HEK293 (cell line): ENCODE measurements at regions of chr11 and their contacts with region 1.

Region 1: DNA sequence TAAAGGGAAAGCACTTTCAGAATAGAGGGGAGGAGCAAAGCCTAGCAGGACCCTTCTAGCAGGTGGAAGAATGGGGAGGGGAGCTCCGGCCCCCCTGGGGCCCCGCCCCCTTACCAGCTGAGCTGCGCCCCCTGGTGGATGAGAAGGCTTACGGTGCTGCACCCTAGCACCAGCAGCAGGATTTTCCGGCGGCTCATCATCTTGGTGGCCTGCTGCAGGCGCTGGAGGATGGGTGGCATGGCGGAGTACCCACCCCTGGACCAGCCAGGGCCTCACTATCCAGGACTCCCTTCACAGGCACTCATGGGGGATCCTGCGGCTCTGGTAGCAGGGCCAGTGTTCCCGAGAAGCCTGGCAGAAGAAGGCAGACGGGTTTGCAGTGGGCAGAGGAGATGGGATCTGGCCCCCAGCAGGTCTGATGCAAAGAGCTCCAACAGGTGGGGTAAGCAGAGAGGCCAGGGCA is 3.8 kb downstream of the GAL3ST3 start:
- H3K4me3 ChIP-seq: no peak overlapping the region
- H3K27ac ChIP-seq: no peak overlapping the region
- H3K4me1 ChIP-seq: no peaks in the 10 kb centered on the region
- CTCF ChIP-seq: peak; percentile 78

Region 2: GRCh38 chr11:65047581-65048422 is 997.4 kb before region 1 on chr11:
- CTCF ChIA-PET with region 1: no interaction called
- POLR2A ChIA-PET with region 1: no interaction called
- H3K4me3 ChIP-seq: no peak overlapping the region
- H3K27ac ChIP-seq: no peak overlapping the region
- H3K4me1 ChIP-seq: no peaks in the 10 kb centered on the region
- CTCF ChIP-seq: no peak

Region 3: GRCh38 chr11:65791691-65792213 is 253.5 kb before region 1 on chr11:
- CTCF ChIA-PET with region 1: no interaction called
- POLR2A ChIA-PET with region 1: no interaction called
- H3K4me3 ChIP-seq: no peak overlapping the region
- H3K27ac ChIP-seq: no peak overlapping the region
- H3K4me1 ChIP-seq: no peaks in the 10 kb centered on the region
- CTCF ChIP-seq: no peak

Region 4: GRCh38 chr11:66011239-66011784 is 33.9 kb before region 1 on chr11:
- CTCF ChIA-PET with region 1: interaction called, 10 read pairs
- POLR2A ChIA-PET with region 1: no interaction called
- H3K4me3 ChIP-seq: no peak overlapping the region
- H3K27ac ChIP-seq: no peak overlapping the region
- H3K4me1 ChIP-seq: no peaks in the 10 kb centered on the region
- CTCF ChIP-seq: no peak

Region 5: GRCh38 chr11:66059966-66060680 is 14.9 kb after region 1 on chr11:
- CTCF ChIA-PET with region 1: interaction called, 20 read pairs
- POLR2A ChIA-PET with region 1: interaction called, 4 read pairs
- H3K4me3 ChIP-seq: no peak overlapping the region
- H3K27ac ChIP-seq: no peak overlapping the region
- H3K4me1 ChIP-seq: no peaks in the 10 kb centered on the region
- CTCF ChIP-seq: no peak